ENCODE measurements at regions of chr1 and their contacts with region 1.

Region 1: GRCh38 chr1:167752219-167752985 is 30.6 kb downstream of the MPZL1 start:
- DNase-seq: peak; percentile 36
- H3K4me3 Mint-ChIP-seq: peak overlapping the region; percentile 40
- H3K27ac Mint-ChIP-seq: peak overlapping the region; percentile 94
- H3K4me1 Mint-ChIP-seq: peaks cover 41% of the 10 kb centered on the region
- H3K27me3 Mint-ChIP-seq: no peaks in the 10 kb centered on the region
- CTCF ChIP-seq: no peak

Region 2: GRCh38 chr1:167715157-167715999 is 37.0 kb before region 1 on chr1:
- CTCF ChIA-PET with region 1: interaction called, 7 read pairs
- POLR2A ChIA-PET with region 1: interaction called, 20 read pairs
- intact Hi-C with region 1: no loop called
- DNase-seq: peak; percentile 97
- H3K4me3 Mint-ChIP-seq: peak overlapping the region; percentile 88
- H3K27ac Mint-ChIP-seq: peak overlapping the region; percentile 91
- H3K4me1 Mint-ChIP-seq: peaks cover 16% of the 10 kb centered on the region
- H3K27me3 Mint-ChIP-seq: no peaks in the 10 kb centered on the region
- CTCF ChIP-seq: peak; percentile 98

Region 3: DNA sequence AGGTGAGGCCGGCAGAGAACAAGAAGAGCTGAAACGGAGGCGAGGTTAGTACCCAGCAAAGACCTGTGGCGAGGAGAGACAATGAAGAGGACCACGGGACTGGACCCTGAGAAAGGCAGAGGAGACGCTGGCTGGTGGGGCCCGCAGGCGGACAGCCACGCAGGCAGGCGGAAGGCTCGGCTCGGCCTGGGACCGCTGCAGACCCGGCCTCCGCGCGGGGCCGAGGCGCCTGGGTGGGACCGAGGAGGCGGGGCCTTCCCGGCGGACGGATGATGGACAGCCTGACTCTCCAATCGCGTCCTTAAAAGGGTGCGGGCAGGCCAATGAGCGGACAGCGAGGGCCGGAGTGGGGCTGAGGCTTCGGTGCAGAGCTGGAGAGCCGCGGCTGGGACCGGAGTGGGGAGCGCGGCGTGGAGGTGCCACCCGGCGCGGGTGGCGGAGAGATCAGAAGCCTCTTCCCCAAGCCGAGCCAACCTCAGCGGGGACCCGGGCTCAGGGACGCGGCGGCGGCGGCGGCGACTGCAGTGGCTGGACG is 30.7 kb before region 1 on chr1 and contains the start of gene MPZL1:
- CTCF ChIA-PET with region 1: interaction called, 8 read pairs
- POLR2A ChIA-PET with region 1: interaction called, 38 read pairs
- intact Hi-C with region 1: no loop called
- DNase-seq: peak; percentile 95
- H3K4me3 Mint-ChIP-seq: peak within 1 kb of the TSS; percentile 84
- H3K27ac Mint-ChIP-seq: peak within 1 kb of the TSS; percentile 92
- H3K4me1 Mint-ChIP-seq: peaks cover 52% of the 10 kb centered on the region
- H3K27me3 Mint-ChIP-seq: no peaks in the 10 kb centered on the region
- CTCF ChIP-seq: no peak
- total RNA-seq, gene MPZL1: 164 and 169 TPM in 2 replicates

Region 4: DNA sequence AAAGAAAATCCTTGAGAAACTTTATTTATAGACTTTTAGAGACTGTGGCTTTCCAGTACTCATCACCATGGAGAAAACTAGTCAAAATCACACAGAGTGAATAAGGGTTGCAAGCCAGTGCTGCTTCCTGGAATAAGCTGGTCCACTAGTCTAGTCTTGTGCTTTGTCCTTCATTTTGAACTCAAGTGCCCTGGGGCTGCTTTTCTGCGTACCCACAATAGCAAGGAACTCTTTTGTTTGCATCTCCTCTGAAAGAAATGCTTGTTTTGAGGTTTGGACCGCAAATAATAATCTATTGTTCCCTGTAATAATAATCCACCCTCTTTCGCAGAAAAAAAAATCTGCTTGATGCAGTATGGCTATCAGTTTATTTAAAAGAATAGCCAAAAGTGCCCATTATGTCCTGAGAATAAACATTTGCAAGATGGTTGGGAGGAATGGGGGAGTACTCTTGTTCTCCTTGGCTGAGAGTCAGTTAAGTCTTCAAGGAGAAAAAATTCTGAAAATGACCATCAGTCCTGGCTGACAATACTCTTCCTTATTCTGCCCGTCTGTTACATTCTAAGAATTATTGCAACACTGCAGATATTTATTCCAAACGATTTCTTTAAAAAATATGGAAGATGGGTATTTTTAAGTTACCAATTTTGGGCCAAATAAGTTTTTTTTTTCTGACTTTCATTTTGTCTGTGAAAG is 11.3 kb after region 1 on chr1:
- CTCF ChIA-PET with region 1: interaction called, 6 read pairs
- POLR2A ChIA-PET with region 1: interaction called, 21 read pairs
- intact Hi-C with region 1: no loop called
- DNase-seq: peak; percentile 45
- H3K4me3 Mint-ChIP-seq: no peak overlapping the region
- H3K27ac Mint-ChIP-seq: no peak overlapping the region
- H3K4me1 Mint-ChIP-seq: peaks cover 30% of the 10 kb centered on the region
- H3K27me3 Mint-ChIP-seq: no peaks in the 10 kb centered on the region
- CTCF ChIP-seq: no peak

Region 5: GRCh38 chr1:167797015-167797414 is 44.6 kb after region 1 on chr1:
- CTCF ChIA-PET with region 1: interaction called, 10 read pairs
- POLR2A ChIA-PET with region 1: interaction called, 31 read pairs
- intact Hi-C with region 1: no loop called
- DNase-seq: peak; percentile 100
- H3K4me3 Mint-ChIP-seq: peak overlapping the region; percentile 57
- H3K27ac Mint-ChIP-seq: peak overlapping the region; percentile 83
- H3K4me1 Mint-ChIP-seq: peaks cover 63% of the 10 kb centered on the region
- H3K27me3 Mint-ChIP-seq: no peaks in the 10 kb centered on the region
- CTCF ChIP-seq: peak; percentile 12

Region 6: DNA sequence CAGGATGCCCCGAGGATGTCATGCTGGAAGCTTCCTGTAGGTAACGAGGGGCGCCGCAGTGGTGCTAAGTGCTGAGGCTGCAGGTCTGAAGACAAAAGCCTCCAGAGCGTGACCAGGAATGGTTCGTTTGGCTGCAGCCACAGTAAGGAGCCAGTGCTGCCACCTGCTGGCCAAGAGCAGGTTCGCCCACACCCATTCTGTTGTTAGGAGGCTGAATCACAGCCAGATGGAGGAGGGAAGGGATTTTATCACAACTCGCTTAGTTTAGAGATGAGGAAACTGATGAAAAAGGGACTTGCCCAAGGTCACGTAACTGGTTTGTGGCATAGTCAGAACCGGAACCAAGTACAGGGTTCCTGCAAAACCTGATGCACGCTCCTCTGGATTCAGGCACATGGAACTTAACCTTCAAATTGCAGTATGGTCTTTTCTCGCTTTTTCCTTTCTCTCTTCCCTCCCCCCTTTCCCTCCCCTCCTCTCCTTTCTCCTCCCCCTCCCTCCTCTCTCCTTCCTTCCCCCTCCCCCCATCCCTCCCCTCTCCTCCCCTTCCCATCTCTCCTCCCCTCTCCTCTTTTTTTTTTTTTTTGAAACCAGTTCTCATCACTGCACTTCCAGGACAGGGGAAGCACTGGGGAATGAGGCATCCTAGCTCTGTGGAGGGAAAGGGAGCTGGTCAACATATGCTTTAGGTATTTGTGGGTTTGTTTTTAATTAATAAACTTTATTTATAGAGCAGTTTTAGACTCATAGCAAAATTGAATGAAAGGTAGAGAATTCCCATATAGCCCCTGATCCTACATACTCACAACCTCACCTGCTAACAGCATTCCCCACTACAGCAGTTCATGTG is 51.2 kb after region 1 on chr1:
- CTCF ChIA-PET with region 1: interaction called, 7 read pairs
- POLR2A ChIA-PET with region 1: interaction called, 5 read pairs
- intact Hi-C with region 1: loop called (anchors 1 kb)
- DNase-seq: peak; percentile 95
- H3K4me3 Mint-ChIP-seq: peak overlapping the region; percentile 3
- H3K27ac Mint-ChIP-seq: no peak overlapping the region
- H3K4me1 Mint-ChIP-seq: peaks cover 43% of the 10 kb centered on the region
- H3K27me3 Mint-ChIP-seq: no peaks in the 10 kb centered on the region
- CTCF ChIP-seq: peak; percentile 97

Measured in MCF 10A (cell line).